H1 (cell line): ENCODE measurements at regions of chr15 and their contacts with region 1.

Region 1: DNA sequence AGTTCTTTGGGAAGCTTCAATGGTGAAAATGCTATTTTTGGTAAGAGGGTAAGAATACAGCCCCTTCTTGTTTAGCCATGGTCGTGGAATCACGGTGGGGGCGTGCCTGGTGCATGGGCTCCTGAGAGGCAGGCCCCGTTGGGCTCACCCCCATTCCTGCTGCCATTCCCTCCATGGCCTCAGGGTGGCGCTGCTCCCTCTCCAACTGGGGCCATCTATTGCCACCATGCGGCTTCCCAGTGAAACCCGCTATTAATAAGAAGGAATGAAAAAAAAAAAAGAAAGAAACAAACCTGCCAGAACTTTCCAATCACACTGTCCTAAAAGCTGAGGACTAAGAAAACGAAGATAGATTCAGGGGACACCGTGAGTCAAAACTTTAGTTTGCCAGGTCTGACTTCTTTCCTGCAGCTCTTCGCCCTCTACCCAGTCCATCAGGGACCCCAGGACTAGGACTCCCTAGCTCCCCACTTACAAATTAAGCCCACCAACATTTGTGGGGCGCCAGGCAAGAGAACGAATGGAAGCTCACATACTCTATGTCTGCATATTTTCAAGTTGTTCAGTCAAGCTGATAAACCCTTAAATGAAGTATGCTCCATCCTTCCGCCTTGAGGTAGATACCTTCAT is 30.6 kb upstream of the ABHD2 start:
- DNase-seq: peak; percentile 60 to 99
- H3K4me3 ChIP-seq: no peak overlapping the region
- H3K27ac ChIP-seq: no peak overlapping the region
- H3K4me1 ChIP-seq: peaks cover 0 to 2% (median 0%) of the 10 kb centered on the region in 4 experiments; a peak in 4 of 7 replicates
- H3K27me3 ChIP-seq: 0 out of 7 replicates have a peak, but pooled peaks cover 0 to 3% (median 0%) of the 10 kb centered on the region in 4 experiments
- CTCF ChIP-seq: peak; percentile 92 to 100 (median 99)
- EP300 ChIP-seq: no peak
- POLR2A ChIP-seq: no peak
- RAD21 ChIP-seq: peak; percentile 96 to 98

Region 2: DNA sequence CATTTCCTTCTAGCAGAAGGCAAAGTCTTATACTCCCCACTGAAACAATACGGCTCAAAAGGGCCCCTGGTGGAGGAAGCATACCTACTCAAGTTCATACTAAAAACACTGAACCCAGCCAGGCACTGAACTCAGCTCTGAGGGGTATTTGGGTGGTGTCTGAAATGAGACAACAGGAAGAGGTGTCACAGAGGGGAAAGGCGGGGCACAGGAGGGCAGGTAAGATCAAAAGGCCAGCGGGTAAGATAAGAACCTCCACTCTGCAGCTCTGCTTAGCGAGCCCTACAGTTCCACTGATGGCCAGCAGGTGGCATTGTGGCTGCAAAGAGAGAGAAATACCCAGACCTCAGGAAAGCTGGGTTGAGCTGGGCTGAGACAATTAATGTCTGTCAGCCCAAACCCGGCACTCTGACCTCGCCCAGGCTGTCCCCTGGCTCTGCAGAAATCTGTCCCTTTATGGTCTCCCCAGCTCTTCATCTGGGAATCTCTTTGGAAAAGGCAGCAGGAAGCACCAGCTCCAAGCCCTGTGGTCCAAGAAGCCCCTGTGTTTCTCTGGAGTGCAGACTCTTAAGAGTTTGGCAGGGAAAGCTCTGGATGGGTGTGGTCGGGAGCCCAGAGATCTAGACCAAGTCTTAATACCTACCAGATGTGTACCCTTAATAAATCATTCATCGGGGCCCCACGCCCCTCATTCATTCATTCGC is 152.8 kb before region 1 on chr15:
- CTCF ChIA-PET with region 1: interaction called, 17 read pairs
- POLR2A ChIA-PET with region 1: no interaction called
- DNase-seq: peak in 1 of 2 experiments; percentile 94
- H3K4me3 ChIP-seq: no peak overlapping the region
- H3K27ac ChIP-seq: no peak overlapping the region
- H3K4me1 ChIP-seq: peaks cover 2 to 32% (median 16%) of the 10 kb centered on the region in 4 experiments
- H3K27me3 ChIP-seq: no peaks in the 10 kb centered on the region
- CTCF ChIP-seq: peak; percentile 87 to 99 (median 91)
- EP300 ChIP-seq: no peak
- POLR2A ChIP-seq: no peak
- RAD21 ChIP-seq: peak; percentile 92 to 94

Region 3: DNA sequence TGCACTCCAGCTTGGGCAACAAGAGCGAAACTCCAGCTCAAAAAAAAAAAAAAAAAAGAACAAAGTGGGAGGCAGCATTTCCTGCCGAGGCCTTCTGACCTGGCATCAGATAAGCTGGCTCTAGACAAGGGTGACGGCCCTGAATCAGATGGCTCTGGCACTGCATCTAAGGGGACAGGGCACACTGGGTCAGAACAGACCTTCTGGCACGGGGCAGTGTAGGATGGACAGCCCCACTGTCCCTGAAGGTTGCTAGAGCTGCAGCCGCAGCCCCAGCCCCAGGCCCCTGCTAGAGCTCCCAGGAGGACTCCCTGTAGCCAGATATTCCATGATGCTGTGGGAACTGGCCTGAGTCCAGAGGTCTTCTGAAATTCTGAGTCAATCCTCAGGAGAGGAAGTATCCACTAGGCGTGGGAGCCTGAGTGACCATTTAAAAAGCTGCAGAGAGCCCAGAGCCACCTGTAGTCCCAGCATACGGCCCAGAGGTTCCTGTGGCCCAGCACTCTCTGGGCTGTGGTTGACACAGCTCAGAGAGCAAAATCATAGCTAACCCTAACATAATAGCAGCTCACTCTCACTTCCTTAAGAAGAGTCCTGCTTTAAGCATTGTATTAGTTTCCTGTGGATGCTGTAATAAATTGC is 75.2 kb before region 1 on chr15:
- CTCF ChIA-PET with region 1: no interaction called
- POLR2A ChIA-PET with region 1: no interaction called
- DNase-seq: no peak
- H3K4me3 ChIP-seq: no peak overlapping the region
- H3K27ac ChIP-seq: no peak overlapping the region
- H3K4me1 ChIP-seq: peaks cover 5 to 22% (median 17%) of the 10 kb centered on the region in 4 experiments
- H3K27me3 ChIP-seq: no peaks in the 10 kb centered on the region
- CTCF ChIP-seq: no peak
- EP300 ChIP-seq: no peak
- POLR2A ChIP-seq: no peak
- RAD21 ChIP-seq: no peak

Region 4: DNA sequence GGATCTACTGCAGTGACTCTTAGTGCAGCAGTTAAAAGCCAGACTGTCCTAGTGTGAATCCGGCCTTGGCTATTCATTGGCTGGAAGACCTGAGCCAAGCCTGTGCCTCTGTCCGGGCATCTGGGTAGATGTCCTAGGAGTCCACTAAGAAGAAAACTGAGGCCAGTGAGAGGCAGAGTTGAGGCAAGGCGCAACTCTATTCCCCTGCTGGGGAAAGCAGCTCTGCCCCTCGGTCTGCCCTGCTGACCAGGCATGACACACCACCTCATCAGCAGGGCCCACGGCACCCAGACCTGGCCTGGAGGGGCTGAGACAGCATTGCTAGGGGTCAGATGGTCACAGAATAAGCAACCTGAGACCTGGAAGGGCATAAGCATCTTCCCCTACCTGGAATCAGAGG is 16.1 kb before region 1 on chr15:
- CTCF ChIA-PET with region 1: interaction called, 15 read pairs
- POLR2A ChIA-PET with region 1: no interaction called
- DNase-seq: no peak
- H3K4me3 ChIP-seq: no peak overlapping the region
- H3K27ac ChIP-seq: no peak overlapping the region
- H3K4me1 ChIP-seq: peaks cover 0 to 2% (median 0%) of the 10 kb centered on the region in 4 experiments; a peak in 2 of 7 replicates
- H3K27me3 ChIP-seq: no peaks in the 10 kb centered on the region
- CTCF ChIP-seq: no peak
- EP300 ChIP-seq: no peak
- POLR2A ChIP-seq: no peak
- RAD21 ChIP-seq: no peak

Region 5: DNA sequence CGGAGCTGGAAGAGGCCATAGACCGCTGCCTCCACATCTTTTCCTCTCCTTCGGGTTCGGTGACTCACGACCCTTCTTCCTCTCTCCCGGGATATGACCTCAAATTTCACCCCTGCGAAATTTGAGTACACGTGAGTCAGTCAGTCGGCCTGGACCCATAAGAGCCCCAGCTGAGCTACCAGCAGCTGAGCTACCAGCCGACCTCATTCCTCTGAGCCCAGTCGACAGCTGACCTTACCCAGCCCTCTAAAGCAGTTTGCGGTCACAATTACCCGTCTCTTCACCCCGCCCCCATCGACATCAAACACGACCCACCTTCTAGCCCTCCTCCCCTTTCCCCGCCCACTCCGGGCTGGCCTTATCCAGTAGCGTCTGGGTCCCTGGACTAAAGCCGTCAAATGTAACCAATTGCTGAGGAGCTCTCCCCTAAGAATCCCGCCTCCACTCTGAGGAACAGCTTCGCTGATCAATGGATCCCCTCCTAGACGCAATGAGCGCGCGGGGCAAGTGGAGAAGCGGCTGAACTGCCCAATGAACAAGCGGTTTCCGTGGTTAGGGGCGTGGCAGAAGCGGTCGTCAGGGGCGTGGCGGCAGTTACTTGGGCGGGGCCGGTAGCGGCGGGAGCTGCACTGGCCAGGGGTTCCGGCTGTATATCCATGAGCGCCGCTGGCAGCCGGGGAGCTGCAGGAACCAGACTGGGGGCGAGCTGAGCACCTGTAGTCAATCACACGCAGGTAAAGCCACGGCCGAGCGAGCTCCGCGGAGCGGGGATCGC is 30.4 kb after region 1 on chr15 and contains the start of gene ABHD2:
- CTCF ChIA-PET with region 1: interaction called, 40 read pairs
- POLR2A ChIA-PET with region 1: no interaction called
- DNase-seq: peak; percentile 99
- H3K4me3 ChIP-seq: peak within 1 kb of the TSS; percentile 84 to 90 (median 87)
- H3K27ac ChIP-seq: peak within 1 kb of the TSS; percentile 35; the same call in 1 of the 2 replicates
- H3K4me1 ChIP-seq: peaks cover 8 to 20% (median 12%) of the 10 kb centered on the region in 4 experiments
- H3K27me3 ChIP-seq: no peaks in the 10 kb centered on the region
- CTCF ChIP-seq: no peak
- EP300 ChIP-seq: peak in 1 of 2 experiments; percentile 56; a peak in 1 of 3 replicates
- POLR2A ChIP-seq: peak in 1 of 2 experiments; percentile 80; a peak in 2 of 3 replicates
- RAD21 ChIP-seq: no peak
- total RNA-seq, gene ABHD2: 23.7 and 27.6 TPM in 2 replicates

Region 6: DNA sequence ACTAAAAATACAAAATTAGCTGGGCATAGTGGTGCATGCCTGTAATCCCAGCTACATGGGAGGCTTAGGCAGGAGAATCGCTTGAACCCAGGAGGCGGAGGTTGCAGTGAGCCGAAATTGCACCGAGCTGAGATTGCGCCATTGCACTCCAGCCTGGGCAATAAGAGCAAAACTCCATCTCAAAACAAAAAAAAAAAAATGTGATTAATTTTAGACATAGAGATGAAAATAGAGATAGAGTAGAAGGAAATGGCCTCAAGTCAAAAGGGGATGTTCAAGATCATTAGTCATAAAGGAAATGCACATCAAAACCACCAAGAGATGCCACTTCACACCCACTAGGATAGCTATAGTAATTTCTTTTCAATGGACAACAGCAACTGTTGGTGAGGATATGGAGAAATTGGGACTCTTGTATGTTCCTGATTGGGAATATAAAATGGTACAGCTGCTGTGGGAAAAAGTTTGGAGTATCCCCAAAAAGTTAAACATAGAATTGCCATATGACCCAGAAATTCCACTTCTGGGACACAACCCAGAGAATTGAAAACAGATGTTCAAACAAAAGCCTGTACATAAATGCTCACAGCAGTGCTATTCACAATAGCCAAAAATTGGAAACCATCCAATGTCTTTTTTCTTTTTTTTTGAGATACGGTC is 86.0 kb after region 1 on chr15:
- CTCF ChIA-PET with region 1: interaction called, 13 read pairs
- POLR2A ChIA-PET with region 1: no interaction called
- DNase-seq: no peak
- H3K4me3 ChIP-seq: no peak overlapping the region
- H3K27ac ChIP-seq: no peak overlapping the region
- H3K4me1 ChIP-seq: no peaks in the 10 kb centered on the region; a peak in 1 of 7 replicates
- H3K27me3 ChIP-seq: no peaks in the 10 kb centered on the region
- CTCF ChIP-seq: no peak
- EP300 ChIP-seq: no peak
- POLR2A ChIP-seq: no peak
- RAD21 ChIP-seq: no peak

Region 7: DNA sequence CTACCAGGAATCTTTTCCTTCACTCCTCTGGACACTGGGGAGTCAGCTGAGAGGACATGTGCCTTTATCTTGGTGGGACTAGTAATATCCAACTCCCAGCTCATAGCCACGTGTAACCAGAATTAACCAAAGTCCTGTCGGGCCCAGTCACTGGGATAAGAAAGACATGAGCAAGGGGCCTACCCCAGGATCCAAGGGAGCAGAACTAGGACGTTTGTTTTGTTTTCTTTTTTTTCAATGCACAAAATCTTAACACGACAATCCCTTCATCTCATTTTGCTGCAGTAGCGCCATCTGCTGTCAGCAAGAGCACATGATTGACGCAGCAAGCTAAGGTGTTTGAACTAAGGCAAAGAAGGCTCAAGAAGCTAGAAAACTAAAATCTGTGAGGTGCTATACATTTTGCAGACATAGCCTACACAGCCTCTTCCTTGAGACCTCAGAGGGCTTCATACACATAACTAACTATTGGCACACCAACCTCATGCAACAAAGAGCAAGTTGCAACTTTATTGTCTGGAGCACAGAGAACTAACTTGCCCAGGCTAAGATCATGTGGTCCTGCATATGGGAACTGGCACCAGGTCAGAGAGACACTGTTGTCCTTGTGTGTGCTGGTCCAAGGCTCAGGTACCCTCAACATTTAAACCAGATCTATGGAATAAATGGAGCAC is 120.2 kb after region 1 on chr15:
- CTCF ChIA-PET with region 1: interaction called, 198 read pairs
- POLR2A ChIA-PET with region 1: no interaction called
- DNase-seq: peak in 1 of 2 experiments; percentile 63
- H3K4me3 ChIP-seq: no peak overlapping the region
- H3K27ac ChIP-seq: no peak overlapping the region
- H3K4me1 ChIP-seq: no peaks in the 10 kb centered on the region
- H3K27me3 ChIP-seq: no peaks in the 10 kb centered on the region
- CTCF ChIP-seq: peak; percentile 41 to 90 (median 83)
- EP300 ChIP-seq: no peak
- POLR2A ChIP-seq: no peak
- RAD21 ChIP-seq: peak; percentile 86